ENCODE measurements at regions of chr7 and their contacts with region 1.

Region 1: DNA sequence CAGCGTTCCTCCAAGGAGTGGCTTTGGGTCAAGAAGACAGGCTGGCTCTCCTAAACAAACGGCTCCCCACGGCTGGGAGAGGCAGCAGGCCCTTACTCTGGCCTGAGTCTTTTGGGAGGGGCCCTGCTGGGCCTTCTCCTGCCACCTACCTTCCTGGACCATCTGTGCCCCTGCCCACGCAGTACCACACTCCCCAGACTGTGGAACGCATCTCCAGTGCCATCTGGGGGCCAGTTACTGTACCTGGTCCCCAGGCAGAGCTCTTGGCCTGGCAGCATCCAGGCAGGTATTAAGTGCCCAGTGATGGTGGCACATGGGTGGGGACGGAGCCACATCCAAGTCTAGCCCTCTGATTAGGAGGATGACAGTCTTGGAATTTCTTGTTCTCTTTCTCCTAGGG is 14.4 kb downstream of the ALKBH4 start:
- DNase-seq: no peak
- H3K4me3 ChIP-seq: no peak overlapping the region
- H3K4me3 Mint-ChIP-seq: no peak overlapping the region
- H3K27ac Mint-ChIP-seq: peak overlapping the region; percentile 53
- H3K4me1 ChIP-seq: peaks cover 3% of the 10 kb centered on the region; the same call in 1 of the 2 replicates
- H3K4me1 Mint-ChIP-seq: no peaks in the 10 kb centered on the region
- H3K27me3 ChIP-seq: no peaks in the 10 kb centered on the region
- H3K27me3 Mint-ChIP-seq: no peaks in the 10 kb centered on the region
- CTCF ChIP-seq: peak in 1 of 2 experiments; percentile 4

Region 2: DNA sequence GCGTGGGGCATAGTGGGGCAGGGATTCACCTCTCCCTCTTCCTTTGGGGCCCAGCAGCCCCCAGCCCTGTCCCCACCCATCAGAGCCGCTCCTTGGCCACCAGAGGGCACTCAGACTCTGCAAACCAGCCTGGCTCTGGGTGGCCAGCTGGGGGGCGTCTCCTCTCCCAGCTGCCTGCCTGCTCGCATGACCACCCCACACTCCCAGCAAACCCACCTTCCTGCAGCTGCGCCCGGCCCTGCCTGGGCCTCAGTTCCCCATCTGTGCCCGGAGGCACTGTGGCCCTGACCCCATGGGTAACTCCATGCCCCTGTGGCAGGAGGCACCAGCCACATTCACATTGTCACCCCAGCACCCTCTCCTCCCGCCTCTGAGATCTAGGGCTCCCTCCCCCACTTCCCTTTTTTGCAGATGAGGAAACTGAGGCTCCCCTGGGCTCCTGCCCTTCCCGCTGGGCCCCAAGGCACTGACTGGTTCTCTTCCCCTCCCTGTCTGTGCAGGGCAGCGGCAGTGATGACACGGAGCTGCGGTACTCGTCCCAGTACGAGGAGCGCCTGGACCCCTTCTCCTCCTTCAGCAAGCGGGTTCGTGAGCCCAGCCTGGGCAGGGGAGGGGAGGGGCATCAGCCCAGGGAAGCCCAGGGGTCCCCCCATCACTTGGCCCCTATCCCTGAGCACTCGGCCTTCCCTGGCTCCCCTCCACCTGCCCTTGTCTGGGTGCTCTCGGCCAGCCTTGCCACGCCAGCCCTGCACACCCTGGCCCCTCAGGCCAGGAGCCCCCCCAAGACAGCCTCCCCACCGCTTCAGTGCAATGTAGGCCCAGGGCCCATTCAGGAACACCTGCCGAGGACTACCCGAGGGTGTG is 170.5 kb before region 1 on chr7:
- CTCF ChIA-PET with region 1: no interaction called
- POLR2A ChIA-PET with region 1: no interaction called
- intact Hi-C with region 1: loop called (anchors 10 kb)
- DNase-seq: peak; percentile 73 to 79
- H3K4me3 ChIP-seq: no peak overlapping the region
- H3K4me3 Mint-ChIP-seq: no peak overlapping the region
- H3K27ac Mint-ChIP-seq: no peak overlapping the region
- H3K4me1 ChIP-seq: no peaks in the 10 kb centered on the region
- H3K4me1 Mint-ChIP-seq: peaks cover 1% of the 10 kb centered on the region
- H3K27me3 ChIP-seq: no peaks in the 10 kb centered on the region
- H3K27me3 Mint-ChIP-seq: no peaks in the 10 kb centered on the region
- CTCF ChIP-seq: peak; percentile 92 to 96

Region 3: GRCh38 chr7:102404005-102404861 is 46.0 kb before region 1 on chr7:
- CTCF ChIA-PET with region 1: interaction called, 4 read pairs
- POLR2A ChIA-PET with region 1: no interaction called
- intact Hi-C with region 1: loop called (anchors 1 kb)
- DNase-seq: peak; percentile 56 to 71
- H3K4me3 ChIP-seq: no peak overlapping the region
- H3K4me3 Mint-ChIP-seq: no peak overlapping the region
- H3K27ac Mint-ChIP-seq: no peak overlapping the region
- H3K4me1 ChIP-seq: no peaks in the 10 kb centered on the region
- H3K4me1 Mint-ChIP-seq: no peaks in the 10 kb centered on the region
- H3K27me3 ChIP-seq: no peaks in the 10 kb centered on the region
- H3K27me3 Mint-ChIP-seq: no peaks in the 10 kb centered on the region
- CTCF ChIP-seq: peak; percentile 74 to 78

Region 4: DNA sequence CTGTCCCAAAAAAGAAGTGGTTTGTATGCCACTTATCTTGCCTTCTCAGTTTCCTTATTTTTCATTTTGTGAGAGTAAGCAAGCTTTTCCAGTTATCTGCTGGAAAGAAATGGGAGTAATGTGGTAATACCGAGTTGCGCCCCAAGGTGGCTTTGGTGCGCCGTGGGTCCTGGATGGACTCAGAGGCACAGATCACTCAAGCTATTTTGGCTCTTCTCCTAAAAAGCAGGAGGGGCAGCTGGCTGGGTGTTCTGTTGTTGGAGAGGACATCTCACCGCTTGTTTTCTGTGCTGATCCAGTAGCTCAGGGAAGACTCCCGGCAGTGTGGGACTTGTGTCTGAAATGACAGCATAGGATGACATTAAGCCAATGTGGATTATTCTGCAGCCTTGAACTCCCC is 37.7 kb before region 1 on chr7:
- CTCF ChIA-PET with region 1: interaction called, 3 read pairs
- POLR2A ChIA-PET with region 1: no interaction called
- intact Hi-C with region 1: loop called (anchors 2 kb)
- DNase-seq: peak in 1 of 2 experiments; percentile 55
- H3K4me3 ChIP-seq: no peak overlapping the region
- H3K4me3 Mint-ChIP-seq: no peak overlapping the region
- H3K27ac Mint-ChIP-seq: no peak overlapping the region
- H3K4me1 ChIP-seq: no peaks in the 10 kb centered on the region
- H3K4me1 Mint-ChIP-seq: no peaks in the 10 kb centered on the region
- H3K27me3 ChIP-seq: no peaks in the 10 kb centered on the region
- H3K27me3 Mint-ChIP-seq: no peaks in the 10 kb centered on the region
- CTCF ChIP-seq: peak; percentile 32 to 43

Region 5: DNA sequence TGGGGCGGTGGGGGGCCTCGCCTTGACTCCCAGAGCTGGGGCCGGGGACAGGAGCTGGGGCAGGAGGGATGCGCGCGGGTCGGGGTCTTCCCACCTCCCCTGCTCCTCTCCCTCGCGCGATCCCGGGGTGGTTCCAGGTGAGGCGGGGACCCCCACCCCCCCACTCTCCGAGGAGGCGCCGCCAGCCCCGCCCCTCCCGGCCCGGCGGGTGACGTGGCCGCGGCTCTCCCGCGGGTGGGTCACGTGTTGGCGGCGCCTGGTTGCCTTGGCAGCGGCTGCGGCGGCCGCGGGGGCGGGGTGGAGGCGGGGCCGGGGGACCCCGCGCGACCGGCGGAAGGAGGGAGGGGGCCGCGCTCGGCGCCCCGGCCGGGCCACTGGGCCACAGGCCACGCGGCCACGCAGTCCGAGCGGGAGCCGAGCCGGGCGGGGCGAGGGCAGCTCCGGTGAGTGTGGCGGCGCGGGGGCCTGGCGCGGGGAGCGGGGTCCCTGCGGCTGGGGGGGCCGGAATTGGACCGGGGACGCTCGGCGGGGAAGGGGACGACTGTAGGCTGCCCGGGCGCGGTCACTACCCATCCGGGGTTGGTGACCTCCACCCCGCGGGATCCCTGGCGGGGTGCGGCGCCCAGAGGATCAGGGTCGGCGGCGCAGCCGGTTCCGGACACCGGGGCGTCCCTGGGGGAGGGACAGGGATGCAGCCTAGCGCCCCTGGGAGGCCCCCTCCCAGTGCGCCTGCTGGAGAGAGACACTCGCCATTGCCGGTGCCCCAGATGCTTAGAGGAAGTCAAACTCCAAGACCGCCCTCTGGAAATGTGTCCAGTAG is 16.8 kb before region 1 on chr7 and contains the start of gene ORAI2:
- CTCF ChIA-PET with region 1: no interaction called
- POLR2A ChIA-PET with region 1: no interaction called
- intact Hi-C with region 1: loop called (anchors 2 kb)
- DNase-seq: peak; percentile 76 to 87
- H3K4me3 ChIP-seq: peak within 1 kb of the TSS; percentile 93
- H3K4me3 Mint-ChIP-seq: peak within 1 kb of the TSS; percentile 78
- H3K27ac Mint-ChIP-seq: peak within 1 kb of the TSS; percentile 78
- H3K4me1 ChIP-seq: peaks cover 22% of the 10 kb centered on the region
- H3K4me1 Mint-ChIP-seq: peaks cover 16% of the 10 kb centered on the region
- H3K27me3 ChIP-seq: no peaks in the 10 kb centered on the region
- H3K27me3 Mint-ChIP-seq: no peaks in the 10 kb centered on the region
- CTCF ChIP-seq: no peak
- total RNA-seq, gene ORAI2: 19.4 and 20.2 TPM in 2 replicates

Region 6: DNA sequence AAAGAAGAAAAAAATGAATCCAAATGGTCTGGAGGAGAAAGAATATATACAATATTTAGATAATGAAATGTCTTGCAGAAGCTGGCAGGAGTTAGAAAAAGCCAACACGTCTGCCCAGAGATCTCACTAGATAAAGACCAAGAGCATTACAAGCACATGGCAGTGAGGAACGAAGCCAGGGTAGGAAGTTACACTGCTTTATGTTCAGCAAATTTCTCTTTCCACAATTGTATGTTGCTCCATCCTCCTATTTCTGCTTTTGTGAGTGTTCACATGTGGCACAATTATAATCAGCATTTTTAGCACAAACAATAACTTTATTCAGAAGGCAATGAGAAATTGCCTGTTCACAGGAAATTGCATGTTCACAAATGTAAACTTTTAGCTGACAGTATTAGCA is 516.2 kb after region 1 on chr7:
- CTCF ChIA-PET with region 1: no interaction called
- POLR2A ChIA-PET with region 1: no interaction called
- intact Hi-C with region 1: no loop called
- DNase-seq: no peak
- H3K4me3 ChIP-seq: no peak overlapping the region
- H3K4me3 Mint-ChIP-seq: no peak overlapping the region
- H3K27ac Mint-ChIP-seq: no peak overlapping the region
- H3K4me1 ChIP-seq: no peaks in the 10 kb centered on the region
- H3K4me1 Mint-ChIP-seq: no peaks in the 10 kb centered on the region
- H3K27me3 ChIP-seq: no peaks in the 10 kb centered on the region
- H3K27me3 Mint-ChIP-seq: no peaks in the 10 kb centered on the region
- CTCF ChIP-seq: no peak